ENCODE measurements at regions of chr22 and their contacts with region 1.

Region 1: DNA sequence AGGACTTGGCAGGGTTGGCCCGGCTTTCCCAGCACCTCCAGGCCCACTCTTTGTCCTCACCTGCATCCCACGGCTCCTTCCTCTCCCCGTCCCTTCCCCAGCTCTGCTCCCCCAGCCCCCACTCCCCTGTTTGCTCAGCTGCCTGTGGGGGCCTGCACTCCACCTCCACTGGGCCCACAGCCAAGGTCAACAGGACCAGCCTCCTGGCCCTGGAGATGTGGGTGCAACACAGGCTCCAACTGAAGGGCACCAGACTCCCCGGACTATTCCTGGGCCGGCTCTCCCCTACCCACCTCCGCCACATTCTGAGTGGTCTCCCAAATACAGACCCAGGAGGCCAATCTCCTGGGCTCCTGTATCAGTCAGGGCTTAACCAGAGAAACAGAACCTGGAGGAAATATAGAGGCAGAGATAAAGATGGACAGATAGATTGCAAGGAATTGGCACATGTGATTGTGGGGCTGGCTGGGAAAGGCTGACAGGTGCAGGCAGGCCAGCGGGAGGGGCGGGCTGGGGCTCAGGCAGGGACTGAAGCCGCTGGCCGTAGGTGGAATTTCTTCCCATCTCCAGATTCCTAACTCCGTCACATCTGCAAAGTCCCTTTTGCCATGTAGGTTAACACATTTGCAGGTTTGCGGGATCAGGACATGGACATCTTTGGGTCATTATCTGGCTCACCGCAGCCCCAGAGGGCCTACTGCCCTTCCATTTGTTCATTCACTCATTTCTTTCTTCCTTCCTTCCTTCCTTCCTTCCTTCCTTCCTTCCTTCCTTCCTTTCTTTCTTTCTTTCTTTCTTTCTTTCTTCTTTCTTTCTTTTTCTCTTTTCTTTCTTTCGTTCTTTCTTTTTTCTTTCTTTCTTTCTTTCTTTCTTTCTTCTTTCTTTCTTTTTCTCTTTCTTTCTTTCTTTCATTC is 45.8 kb upstream of the MYH9 start:
- DNase-seq: peak in 1 of 2 experiments; percentile 53
- H3K4me3 ChIP-seq: no peak overlapping the region
- H3K4me3 Mint-ChIP-seq: peak overlapping the region; percentile 50
- H3K27ac Mint-ChIP-seq: peak overlapping the region; percentile 73
- H3K4me1 ChIP-seq: peaks cover 55% of the 10 kb centered on the region
- H3K4me1 Mint-ChIP-seq: peaks cover 38% of the 10 kb centered on the region
- H3K27me3 ChIP-seq: no peaks in the 10 kb centered on the region
- H3K27me3 Mint-ChIP-seq: no peaks in the 10 kb centered on the region
- CTCF ChIP-seq: no peak

Region 2: DNA sequence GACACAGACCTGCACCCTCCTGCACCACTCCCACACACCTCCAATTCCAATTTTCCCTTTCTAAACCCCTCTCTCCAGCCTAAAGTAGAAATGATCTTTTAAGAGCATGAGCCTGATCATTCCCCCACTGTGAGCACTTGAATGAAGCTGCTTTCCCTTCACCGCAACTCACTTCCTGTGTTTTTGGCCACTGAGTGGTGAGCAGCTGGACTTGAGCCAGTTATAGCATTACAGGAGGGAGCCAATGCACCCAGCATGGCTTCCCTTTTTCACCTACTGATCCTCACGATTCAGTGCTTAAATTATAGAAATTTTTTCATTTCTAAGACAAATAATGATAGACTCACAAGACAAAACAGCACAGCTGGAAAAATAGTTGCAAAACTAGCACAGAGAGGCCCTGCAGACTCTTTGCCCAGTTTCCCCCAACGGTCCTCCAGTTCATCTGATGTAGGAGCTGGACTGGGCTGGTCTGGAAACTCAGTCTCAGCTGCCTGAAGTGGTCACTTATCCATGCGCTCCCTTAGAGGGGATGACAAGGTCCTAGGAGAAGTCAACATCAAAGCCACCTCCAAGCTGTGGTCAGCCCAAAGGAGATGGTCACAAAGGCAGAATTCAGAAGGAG is 222.2 kb before region 1 on chr22:
- CTCF ChIA-PET with region 1: no interaction called
- POLR2A ChIA-PET with region 1: no interaction called
- intact Hi-C with region 1: no loop called
- DNase-seq: no peak
- H3K4me3 ChIP-seq: no peak overlapping the region
- H3K4me3 Mint-ChIP-seq: no peak overlapping the region
- H3K27ac Mint-ChIP-seq: no peak overlapping the region
- H3K4me1 ChIP-seq: peaks cover 4% of the 10 kb centered on the region; the same call in 1 of the 2 replicates
- H3K4me1 Mint-ChIP-seq: peaks cover 6% of the 10 kb centered on the region
- H3K27me3 ChIP-seq: no peaks in the 10 kb centered on the region
- H3K27me3 Mint-ChIP-seq: peaks cover 6% of the 10 kb centered on the region
- CTCF ChIP-seq: no peak

Region 3: GRCh38 chr22:36419177-36419911 is 14.2 kb before region 1 on chr22:
- CTCF ChIA-PET with region 1: interaction called, 5 read pairs
- POLR2A ChIA-PET with region 1: interaction called, 7 read pairs
- intact Hi-C with region 1: loop called (anchors 1 kb)
- DNase-seq: peak; percentile 91 to 92
- H3K4me3 ChIP-seq: peak overlapping the region; percentile 25
- H3K4me3 Mint-ChIP-seq: peak overlapping the region; percentile 70
- H3K27ac Mint-ChIP-seq: peak overlapping the region; percentile 91
- H3K4me1 ChIP-seq: peaks cover 41% of the 10 kb centered on the region
- H3K4me1 Mint-ChIP-seq: peaks cover under 1% of the 10 kb centered on the region
- H3K27me3 ChIP-seq: no peaks in the 10 kb centered on the region
- H3K27me3 Mint-ChIP-seq: no peaks in the 10 kb centered on the region
- CTCF ChIP-seq: no peak